ENCODE measurements at regions of chr19 and their contacts with region 1.

Region 1: DNA sequence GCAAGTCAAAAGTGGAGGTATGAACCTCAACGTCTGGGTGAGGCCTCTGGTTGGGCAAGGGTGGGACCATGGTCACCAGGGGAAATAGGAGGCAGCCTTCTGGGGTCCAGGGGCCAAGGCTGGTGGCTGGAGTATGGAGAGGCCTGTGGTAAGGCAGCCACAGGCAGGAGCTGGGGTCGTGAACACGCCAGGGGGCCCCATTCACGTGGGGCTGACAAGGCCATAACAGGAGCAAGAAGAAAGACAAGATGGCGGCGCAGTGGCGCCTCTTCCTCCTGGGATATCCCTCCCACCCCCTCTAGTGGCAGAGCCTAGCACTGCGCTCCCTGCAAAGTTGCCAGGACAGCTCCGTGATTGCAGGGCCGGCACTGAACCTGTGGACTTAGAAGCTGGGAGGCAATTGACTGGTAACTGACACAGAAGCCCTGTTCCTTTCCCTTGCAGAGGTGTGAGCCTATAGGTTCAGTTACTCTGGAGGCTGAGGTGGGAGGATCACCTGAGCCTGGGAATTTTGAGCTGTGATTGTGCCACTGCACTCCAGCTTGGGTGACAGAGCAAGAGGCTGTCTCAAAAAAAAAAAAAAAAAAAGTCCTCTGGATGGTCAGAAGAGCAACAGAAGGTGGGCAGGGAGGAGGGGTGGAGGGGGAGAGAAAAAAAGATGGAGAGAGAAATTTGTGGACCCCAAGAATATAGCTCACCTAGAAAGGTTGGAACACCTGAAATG is 19.7 kb upstream of the EDDM13 start:
- DNase-seq: peak; percentile 83
- ATAC-seq: peak; percentile 87
- H3K4me3 Mint-ChIP-seq: no peak overlapping the region
- H3K27ac Mint-ChIP-seq: peak overlapping the region; percentile 25
- H3K4me1 Mint-ChIP-seq: peaks cover 5% of the 10 kb centered on the region
- H3K27me3 Mint-ChIP-seq: no peaks in the 10 kb centered on the region

Region 2: GRCh38 chr19:56066152-56067023 is 186.5 kb before region 1 on chr19:
- CTCF ChIA-PET with region 1: interaction called, 46 read pairs
- POLR2A ChIA-PET with region 1: no interaction called
- DNase-seq: peak; percentile 74
- ATAC-seq: peak; percentile 86
- H3K4me3 Mint-ChIP-seq: peak overlapping the region; percentile 64
- H3K27ac Mint-ChIP-seq: peak overlapping the region; percentile 47
- H3K4me1 Mint-ChIP-seq: peaks cover 12% of the 10 kb centered on the region
- H3K27me3 Mint-ChIP-seq: peaks cover 11% of the 10 kb centered on the region

Region 3: GRCh38 chr19:56080669-56081401 is 172.0 kb before region 1 on chr19:
- CTCF ChIA-PET with region 1: interaction called, 28 read pairs
- POLR2A ChIA-PET with region 1: interaction called, 3 read pairs
- DNase-seq: peak; percentile 80
- ATAC-seq: peak; percentile 71
- H3K4me3 Mint-ChIP-seq: peak overlapping the region; percentile 67
- H3K27ac Mint-ChIP-seq: no peak overlapping the region
- H3K4me1 Mint-ChIP-seq: peaks cover 10% of the 10 kb centered on the region
- H3K27me3 Mint-ChIP-seq: peaks cover 4% of the 10 kb centered on the region

Region 4: DNA sequence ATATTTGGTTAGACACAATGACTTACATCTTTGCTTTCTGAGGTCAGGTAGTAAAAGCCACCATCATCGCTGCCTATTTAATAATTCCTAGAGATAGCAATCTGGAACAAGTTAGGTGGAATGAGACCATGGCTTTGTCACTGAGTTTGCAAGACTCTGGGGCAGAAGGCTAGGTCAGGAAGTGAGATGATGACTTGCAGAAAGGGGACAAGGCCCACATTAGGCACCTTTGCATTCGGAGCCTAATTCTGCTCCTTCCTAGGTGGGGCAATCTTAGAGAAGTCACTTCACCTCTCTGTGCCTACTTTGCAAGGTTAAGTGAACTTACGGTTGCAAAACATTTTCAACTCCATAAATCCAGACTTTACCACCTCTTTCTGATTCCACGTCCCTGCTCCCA is 29.9 kb after region 1 on chr19:
- CTCF ChIA-PET with region 1: no interaction called
- POLR2A ChIA-PET with region 1: no interaction called
- DNase-seq: no peak
- ATAC-seq: no peak
- H3K4me3 Mint-ChIP-seq: no peak overlapping the region
- H3K27ac Mint-ChIP-seq: no peak overlapping the region
- H3K4me1 Mint-ChIP-seq: no peaks in the 10 kb centered on the region
- H3K27me3 Mint-ChIP-seq: no peaks in the 10 kb centered on the region

Region 5: GRCh38 chr19:56314562-56315077 is 61.8 kb after region 1 on chr19 and contains the start of gene ZSCAN5A:
- CTCF ChIA-PET with region 1: interaction called, 22 read pairs
- POLR2A ChIA-PET with region 1: interaction called, 3 read pairs
- DNase-seq: peak; percentile 96
- ATAC-seq: peak; percentile 86
- H3K4me3 Mint-ChIP-seq: peak within 1 kb of the TSS; percentile 89
- H3K27ac Mint-ChIP-seq: peak within 1 kb of the TSS; percentile 98
- H3K4me1 Mint-ChIP-seq: peaks cover 27% of the 10 kb centered on the region
- H3K27me3 Mint-ChIP-seq: no peaks in the 10 kb centered on the region
- total RNA-seq, gene ZSCAN5A: 8.2 to 12.1 TPM

Region 6: GRCh38 chr19:56350416-56351045 is 97.7 kb after region 1 on chr19:
- CTCF ChIA-PET with region 1: interaction called, 19 read pairs
- POLR2A ChIA-PET with region 1: no interaction called
- DNase-seq: peak; percentile 70
- ATAC-seq: no peak
- H3K4me3 Mint-ChIP-seq: no peak overlapping the region
- H3K27ac Mint-ChIP-seq: no peak overlapping the region
- H3K4me1 Mint-ChIP-seq: no peaks in the 10 kb centered on the region
- H3K27me3 Mint-ChIP-seq: no peaks in the 10 kb centered on the region

Measured in activated CD8-positive, alpha-beta T cell treated with anti-CD3 and anti-CD28 coated beads, Interleukin-2, amount 10 ng/mL, durations not matched to agents 7 days and 5 days (primary cell).